Cardiac septum (tissue), 1 donor: ENCODE measurements at regions of chr15 and their contacts with region 1.

Region 1: DNA sequence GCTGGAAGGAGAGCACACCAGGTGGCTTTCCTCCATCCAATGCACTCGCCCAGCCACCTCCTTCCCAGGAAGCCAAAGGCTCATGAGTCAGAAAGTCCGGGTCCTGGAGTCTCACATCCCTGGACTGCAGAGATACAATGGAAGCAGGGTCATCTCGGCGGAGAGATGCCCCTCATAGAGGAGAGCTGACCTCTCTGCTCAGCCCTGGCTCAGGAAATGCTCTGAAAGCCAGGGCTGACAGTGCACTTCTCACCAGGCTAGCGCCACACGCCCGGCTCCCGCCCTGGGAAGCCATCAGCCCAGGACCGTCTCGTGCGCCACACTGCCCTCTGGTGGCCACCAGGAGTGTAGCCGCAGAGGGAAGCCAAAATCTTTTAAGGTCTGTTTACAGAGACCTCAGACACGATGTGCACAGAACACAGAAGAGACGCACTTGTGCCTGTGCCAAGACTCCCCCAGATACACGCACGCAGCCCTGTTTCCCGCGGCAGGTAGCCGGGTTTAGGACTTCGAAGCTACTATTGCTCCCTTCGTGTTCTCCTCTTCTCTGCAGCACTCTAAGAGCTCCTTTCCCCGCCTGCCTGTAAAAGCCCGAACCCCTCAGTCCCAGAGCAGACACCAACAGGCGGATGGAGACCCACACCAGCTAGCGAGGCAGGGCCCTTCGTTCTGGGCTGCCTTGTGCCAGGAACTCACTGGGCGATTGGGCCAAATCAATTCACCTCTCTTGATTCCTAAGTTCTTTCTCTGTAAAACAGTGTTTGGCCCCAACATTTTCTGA is 9.7 kb downstream of the NTRK3 start:
- DNase-seq: peak; percentile 89

Region 2: DNA sequence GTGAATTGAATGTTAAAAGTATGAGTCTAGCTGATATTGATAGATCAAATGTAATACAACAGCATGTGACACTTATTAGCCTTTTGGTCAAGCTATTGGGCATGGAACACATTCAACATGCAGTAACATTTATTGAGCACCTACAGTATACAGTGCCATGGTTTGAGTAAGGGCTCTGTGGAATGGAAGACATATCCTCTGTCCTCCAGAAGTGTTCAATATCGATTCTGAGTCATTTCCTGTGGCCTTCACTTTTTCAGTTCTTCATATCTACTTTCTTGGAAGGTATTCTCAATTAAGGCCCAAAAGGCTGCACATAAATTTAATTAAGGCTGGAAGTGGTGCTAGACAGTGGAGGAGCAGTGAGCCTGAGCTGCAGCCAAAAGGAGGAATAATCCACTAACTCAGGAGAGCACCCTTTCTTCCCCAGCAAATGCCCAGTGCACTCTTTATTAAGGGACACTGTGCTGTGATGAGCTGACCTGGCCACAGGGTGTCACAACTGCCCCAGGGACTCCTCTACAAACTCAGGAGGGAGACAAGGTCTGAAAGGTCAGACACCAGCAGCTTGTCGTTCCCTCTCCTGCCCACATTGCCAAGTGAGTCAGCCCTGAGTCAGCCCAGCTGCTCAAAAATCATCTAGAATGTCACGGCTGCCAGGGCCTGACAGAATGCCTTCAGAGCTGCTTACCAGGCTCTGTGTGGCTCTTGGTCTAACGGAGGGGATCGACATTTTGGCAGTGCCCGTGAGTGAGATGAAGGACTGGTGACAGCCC is 1622.4 kb before region 1 on chr15:
- intact Hi-C with region 1: loop called (anchors 10 kb)
- DNase-seq: peak; percentile 85

Region 3: GRCh38 chr15:86922690-86923089 is 1324.2 kb before region 1 on chr15:
- intact Hi-C with region 1: loop called (anchors 5 kb)
- DNase-seq: no peak

Region 4: GRCh38 chr15:87604857-87605446 is 641.9 kb before region 1 on chr15:
- intact Hi-C with region 1: loop called (anchors 10 kb)
- DNase-seq: no peak

Region 5: DNA sequence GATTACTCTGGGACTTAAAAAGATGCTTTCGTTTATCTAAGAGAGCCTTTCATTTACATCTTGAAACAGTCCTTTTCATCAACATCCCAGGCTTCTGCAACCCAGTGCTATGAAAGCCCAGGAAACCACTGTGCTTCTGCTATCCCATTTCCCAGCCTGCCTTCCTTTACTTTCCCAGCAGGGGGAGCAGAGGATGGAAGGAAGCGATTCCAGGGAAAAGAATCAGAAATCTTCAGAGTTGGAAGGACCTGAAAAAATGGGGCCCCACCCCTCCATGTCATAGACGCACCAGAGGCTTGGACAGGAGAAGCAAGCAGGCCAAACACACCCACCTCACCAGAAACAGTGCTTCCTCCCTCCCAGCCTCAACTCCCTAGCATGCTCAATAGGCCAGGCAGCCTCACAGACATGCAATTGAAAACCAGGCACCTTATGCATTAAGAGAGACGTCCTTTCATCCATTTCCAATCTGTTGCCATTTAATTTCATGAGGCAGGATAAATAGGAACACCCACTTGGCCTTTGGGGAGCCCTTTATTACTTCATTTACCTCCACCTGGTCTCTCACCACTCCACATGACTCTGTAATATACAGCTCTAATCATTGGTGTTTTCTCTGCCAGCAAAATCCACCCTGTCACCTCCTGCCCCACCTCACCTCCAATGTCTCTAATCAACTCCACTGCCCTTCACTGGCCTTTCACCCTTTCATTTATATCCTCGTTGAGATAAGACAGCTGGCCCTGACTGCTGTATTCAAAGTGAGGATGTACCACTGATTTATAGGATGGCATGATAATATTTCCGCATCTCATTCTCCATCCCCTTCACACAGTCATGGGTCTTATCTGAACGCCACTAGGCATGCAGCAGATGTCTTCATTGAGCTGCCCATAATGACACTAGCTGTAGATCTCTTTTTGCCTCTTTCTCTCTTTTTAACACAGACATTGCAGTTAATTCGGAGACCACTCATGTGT is 574.3 kb before region 1 on chr15:
- intact Hi-C with region 1: loop called (anchors 5 kb)
- DNase-seq: no peak

Region 6: DNA sequence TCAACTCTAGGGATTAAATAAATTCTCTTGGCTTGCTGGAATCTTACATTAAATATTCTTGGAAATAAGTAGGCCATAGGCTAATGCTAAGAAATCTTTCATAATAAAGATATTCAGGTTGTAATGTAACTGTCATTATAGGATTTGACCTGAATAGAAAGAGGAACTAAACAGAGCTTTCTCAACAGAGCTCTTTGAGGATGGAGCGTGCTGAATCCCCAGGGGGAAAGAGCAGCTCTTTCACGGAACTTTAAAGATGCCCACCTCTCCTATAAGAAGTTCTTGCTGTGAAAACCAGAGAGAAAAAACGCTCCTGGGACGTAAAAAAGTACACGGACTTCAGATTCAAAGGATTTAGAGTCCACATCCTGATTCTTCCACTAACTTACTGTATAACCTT is 68.2 kb before region 1 on chr15:
- intact Hi-C with region 1: no loop called
- DNase-seq: no peak

Region 7: DNA sequence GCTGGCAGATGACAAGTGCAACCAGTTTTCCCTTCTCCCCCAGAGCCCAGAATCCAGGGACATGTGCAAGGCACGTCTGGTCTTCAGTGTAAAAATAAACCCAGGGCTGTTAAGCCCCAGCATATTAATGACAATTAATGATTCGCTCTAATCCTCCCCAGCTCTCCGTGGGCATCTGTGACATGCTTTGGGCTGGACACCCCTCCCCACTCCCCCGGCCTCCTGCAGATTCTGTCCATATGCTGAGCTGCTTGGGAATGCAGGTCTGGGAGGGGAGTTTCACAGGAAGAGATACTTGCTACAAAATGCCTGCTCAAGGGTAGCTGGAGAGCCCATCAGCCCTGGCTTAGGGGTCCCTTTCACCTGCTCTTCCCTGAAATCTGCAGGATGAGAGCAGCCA is 52.6 kb after region 1 on chr15:
- intact Hi-C with region 1: no loop called
- DNase-seq: no peak